Stomach (tissue), 19 donors: ENCODE measurements at regions of chr2 and their contacts with region 1.

Region 1: DNA sequence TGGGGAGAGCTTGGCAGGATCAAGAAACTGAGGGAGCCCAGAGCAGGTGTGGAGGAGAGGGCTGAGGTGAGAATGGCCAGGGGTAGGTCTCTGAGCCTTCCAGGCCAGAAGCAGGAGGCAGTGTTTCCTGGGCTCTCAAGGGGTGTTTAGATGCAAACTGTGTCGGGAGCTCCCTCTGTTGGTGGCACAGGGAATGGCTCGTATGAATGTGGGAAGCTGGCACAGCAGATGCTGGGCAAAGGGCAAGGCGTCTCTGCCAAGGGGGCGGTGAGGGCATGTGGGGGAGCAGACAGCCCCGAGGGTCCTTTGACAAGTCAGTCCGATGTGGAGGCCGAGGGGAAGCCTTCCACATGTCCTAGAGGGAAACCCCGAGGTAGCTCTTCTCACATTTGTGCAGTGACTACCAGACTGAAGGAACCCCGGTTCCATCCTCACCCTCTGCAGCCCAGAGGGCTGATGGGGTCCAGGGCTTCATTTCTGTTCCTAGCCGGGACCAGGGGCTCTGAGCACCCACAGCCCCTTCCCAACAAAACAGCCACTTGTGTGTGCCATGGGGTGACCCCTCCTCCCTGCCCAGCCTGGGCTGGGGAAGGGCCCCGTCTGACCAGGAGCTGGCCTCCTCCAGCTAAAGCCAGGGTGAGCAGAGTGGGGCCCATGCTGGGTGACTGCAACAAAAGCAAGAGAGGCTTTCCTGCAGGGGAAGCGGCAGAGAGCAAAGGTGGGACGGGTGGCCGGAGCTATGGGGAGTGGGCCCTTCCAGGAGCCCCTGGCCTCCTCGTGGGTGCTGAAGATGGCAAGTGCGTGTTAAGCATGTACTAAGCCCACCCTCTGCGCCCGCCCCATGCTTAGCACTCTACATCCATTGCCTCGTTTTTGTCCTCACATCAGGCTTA is 103.4 kb downstream of the SEPTIN10 start:
- DNase-seq: peak; percentile 84 to 92
- H3K4me3 ChIP-seq: no peak overlapping the region
- H3K27ac ChIP-seq: no peak overlapping the region
- H3K4me1 ChIP-seq: peaks cover 4 to 31% (median 14%) of the 10 kb centered on the region in 4 donors
- H3K27me3 ChIP-seq: no peaks in the 10 kb centered on the region
- CTCF ChIP-seq: peak in 5 of 7 experiments; percentile 90 to 93 (median 93)
- EP300 ChIP-seq: no peak
- POLR2A ChIP-seq: no peak

Region 2: DNA sequence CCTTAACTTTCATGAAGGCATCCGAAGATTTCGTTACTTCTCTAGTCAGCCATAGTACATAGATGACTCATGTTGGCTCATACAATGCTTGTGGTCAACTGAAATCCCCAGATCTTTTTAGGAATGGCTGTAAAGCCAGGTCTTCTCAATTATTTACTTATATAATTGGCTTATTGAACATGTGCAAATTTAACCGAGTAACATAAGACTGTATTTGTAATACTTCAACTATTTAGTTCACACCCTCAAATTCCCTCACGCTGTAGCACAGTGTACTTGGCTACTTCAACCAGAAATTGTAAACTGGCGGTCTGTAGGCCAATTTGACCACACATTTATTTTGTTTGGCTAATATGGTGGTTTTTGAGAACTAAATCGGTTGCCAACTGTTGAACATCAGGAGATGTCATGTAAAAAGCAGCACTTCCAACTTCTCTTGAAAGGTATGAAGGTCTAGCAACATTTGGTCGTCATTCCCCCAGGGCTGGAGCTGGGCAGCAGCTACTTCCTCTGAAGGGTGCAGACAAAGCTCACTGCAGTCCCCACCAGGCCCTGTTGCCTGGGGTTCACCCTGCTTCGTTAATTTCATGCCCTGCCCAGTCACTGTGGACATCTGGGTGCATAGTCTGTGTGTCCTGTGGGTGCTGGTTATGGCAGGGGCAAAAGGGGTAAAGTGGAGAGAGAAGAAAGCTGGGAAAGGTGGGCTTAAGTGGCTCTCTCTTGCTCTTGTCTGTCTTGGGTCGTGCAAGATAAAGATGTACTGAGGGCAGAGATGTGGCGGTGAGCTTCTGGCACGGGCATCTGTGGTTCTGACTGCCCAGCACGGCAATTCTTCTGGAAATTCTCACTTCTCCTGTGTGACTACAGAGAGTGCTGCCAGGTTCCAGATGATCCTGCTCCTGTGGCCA is 384.5 kb before region 1 on chr2:
- intact Hi-C with region 1: loop called (anchors 2 kb)
- DNase-seq: no peak
- H3K4me3 ChIP-seq: no peak overlapping the region
- H3K27ac ChIP-seq: peak overlapping the region in 1 of 5 donors; percentile 28
- H3K4me1 ChIP-seq: peaks cover 16 to 43% (median 24%) of the 10 kb centered on the region in 4 donors
- H3K27me3 ChIP-seq: peaks cover 0 to 40% (median 25%) of the 10 kb centered on the region in 3 donors
- CTCF ChIP-seq: no peak
- EP300 ChIP-seq: no peak
- POLR2A ChIP-seq: no peak

Region 3: GRCh38 chr2:109409321-109410038 is 100.9 kb before region 1 on chr2:
- intact Hi-C with region 1: no loop called
- DNase-seq: no peak
- H3K4me3 ChIP-seq: no peak overlapping the region
- H3K27ac ChIP-seq: no peak overlapping the region
- H3K4me1 ChIP-seq: peaks cover 0 to 12% (median 2%) of the 10 kb centered on the region in 4 donors
- H3K27me3 ChIP-seq: no peaks in the 10 kb centered on the region
- CTCF ChIP-seq: no peak
- EP300 ChIP-seq: no peak
- POLR2A ChIP-seq: no peak